Activated B cell treated with CpG ODN at 0.5 μM for 24 hours (primary cell): ENCODE measurements at regions of chr10 and their contacts with region 1.

Region 1: DNA sequence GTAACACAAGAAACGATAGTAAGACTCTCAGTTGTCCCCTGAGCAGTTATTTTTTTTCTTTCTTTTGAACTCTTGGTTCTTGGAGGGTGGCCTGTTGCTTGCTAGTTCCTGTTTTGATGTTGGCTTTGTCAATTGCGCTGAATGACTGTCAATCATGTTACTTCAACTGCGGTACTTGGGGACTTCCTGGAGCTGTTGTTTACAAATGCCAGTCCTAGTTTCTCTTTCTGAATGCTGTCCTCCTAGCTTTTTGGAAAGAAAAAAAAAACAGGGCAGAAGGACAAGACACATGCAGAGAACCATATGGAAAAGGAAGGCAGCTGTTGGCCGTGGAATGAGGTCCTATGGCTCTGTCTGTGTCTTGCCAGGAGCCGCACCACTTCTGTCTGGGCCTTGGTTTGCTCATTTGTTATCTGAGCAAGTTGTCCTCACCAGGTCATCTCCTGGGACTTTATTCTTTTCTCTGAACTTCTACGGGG is 7.0 kb upstream of the PDCD4 start:
- DNase-seq: no peak
- ATAC-seq: peak; percentile 50
- H3K4me3 Mint-ChIP-seq: peak overlapping the region; percentile 79
- H3K27ac Mint-ChIP-seq: peak overlapping the region; percentile 97
- H3K4me1 Mint-ChIP-seq: peaks cover 98% of the 10 kb centered on the region
- H3K27me3 Mint-ChIP-seq: no peaks in the 10 kb centered on the region
- CTCF ChIP-seq: no peak

Region 2: DNA sequence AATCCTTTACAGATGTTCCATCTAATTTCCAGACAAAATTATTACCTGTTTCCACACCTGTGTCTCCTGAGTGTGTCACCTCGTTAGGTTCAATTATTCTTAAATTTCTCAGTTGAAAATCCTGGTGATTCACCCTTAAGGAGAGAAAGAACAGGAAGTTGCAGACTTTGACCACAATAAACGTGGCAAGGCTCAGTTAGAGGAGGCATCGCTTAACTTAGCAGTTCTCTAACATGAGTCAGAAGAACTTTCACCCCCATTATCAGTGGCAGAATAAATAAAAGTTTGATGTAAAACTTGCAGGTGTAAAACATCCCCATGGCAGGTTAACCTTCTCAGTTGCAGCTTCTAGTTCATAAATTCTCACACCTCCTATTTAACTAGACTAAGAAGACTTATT is 949.7 kb before region 1 on chr10:
- CTCF ChIA-PET with region 1: no interaction called
- POLR2A ChIA-PET with region 1: no interaction called
- intact Hi-C with region 1: loop called (anchors 10 kb)
- DNase-seq: no peak
- ATAC-seq: peak; percentile 53
- H3K4me3 Mint-ChIP-seq: no peak overlapping the region
- H3K27ac Mint-ChIP-seq: peak overlapping the region; percentile 54
- H3K4me1 Mint-ChIP-seq: peaks cover 67% of the 10 kb centered on the region
- H3K27me3 Mint-ChIP-seq: no peaks in the 10 kb centered on the region
- CTCF ChIP-seq: no peak

Region 3: GRCh38 chr10:110613341-110613995 is 251.2 kb before region 1 on chr10:
- CTCF ChIA-PET with region 1: no interaction called
- POLR2A ChIA-PET with region 1: no interaction called
- intact Hi-C with region 1: no loop called
- DNase-seq: no peak
- ATAC-seq: peak; percentile 73
- H3K4me3 Mint-ChIP-seq: peak overlapping the region; percentile 59
- H3K27ac Mint-ChIP-seq: peak overlapping the region; percentile 4
- H3K4me1 Mint-ChIP-seq: peaks cover 30% of the 10 kb centered on the region
- H3K27me3 Mint-ChIP-seq: no peaks in the 10 kb centered on the region
- CTCF ChIP-seq: no peak

Region 4: GRCh38 chr10:111057006-111057405 is 192.3 kb after region 1 on chr10:
- CTCF ChIA-PET with region 1: no interaction called
- POLR2A ChIA-PET with region 1: no interaction called
- intact Hi-C with region 1: no loop called
- DNase-seq: no peak
- ATAC-seq: no peak
- H3K4me3 Mint-ChIP-seq: no peak overlapping the region
- H3K27ac Mint-ChIP-seq: no peak overlapping the region
- H3K4me1 Mint-ChIP-seq: no peaks in the 10 kb centered on the region
- H3K27me3 Mint-ChIP-seq: peaks cover 30% of the 10 kb centered on the region
- CTCF ChIP-seq: no peak